Endothelial cell of umbilical vein (primary cell): ENCODE measurements at regions of chr6 and their contacts with region 1.

Region 1: DNA sequence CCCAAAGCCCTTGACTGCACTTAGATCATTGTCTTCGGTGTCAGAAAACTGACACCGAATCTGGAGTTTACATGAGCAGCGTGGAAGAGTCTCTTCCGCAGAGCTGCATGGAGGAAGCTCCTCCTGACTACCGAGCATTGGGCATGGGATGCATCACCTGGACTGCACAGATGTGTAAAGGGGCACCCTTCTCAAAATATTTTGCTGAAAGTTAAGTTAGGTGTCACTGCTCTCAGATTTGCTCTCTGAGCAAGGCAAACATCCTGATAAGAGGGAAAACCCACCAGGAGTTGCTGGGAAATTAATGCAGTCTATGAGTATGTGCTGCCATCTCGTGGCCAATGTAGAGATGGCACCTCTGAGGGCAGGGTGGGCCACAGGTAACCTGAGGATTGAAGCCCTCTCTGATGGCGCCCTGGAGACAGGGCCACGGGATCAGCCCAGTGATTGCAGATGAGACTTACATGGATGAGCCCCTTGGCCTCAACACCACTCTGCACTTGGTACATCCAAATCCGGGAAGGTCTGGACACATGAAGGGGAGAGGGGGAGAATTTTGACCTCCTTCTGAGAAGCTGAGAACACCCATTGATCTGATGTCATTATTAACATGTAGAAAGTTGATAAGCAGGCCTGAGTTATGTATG is 129.9 kb downstream of the LPA start:
- DNase-seq: peak; percentile 47
- H3K4me3 ChIP-seq: no peak overlapping the region
- H3K27ac ChIP-seq: no peak overlapping the region
- H3K4me1 ChIP-seq: no peaks in the 10 kb centered on the region
- H3K27me3 ChIP-seq: no peaks in the 10 kb centered on the region
- CTCF ChIP-seq: peak; percentile 71 to 79
- POLR2A ChIP-seq: no peak

Region 2: DNA sequence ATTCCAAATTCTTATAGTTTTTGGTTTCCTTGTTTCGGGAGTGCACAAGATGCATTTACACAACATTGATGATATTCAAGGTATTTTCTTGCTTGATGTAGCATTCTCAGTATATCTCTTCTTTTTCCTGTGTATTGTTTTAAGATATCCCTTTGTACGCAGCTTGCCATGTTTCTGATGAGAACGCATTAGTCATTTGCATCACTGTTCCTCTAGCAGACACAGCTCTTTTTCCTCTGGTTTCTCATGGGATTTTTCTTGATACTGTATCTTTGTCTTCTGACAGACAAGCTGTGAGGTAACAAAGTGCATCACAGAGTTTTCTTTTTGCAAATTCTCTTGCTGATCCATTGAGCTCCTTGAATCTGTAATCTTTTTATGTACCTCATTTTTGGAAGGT is 39.6 kb before region 1 on chr6:
- CTCF ChIA-PET with region 1: no interaction called
- POLR2A ChIA-PET with region 1: no interaction called
- dilution Hi-C with region 1: no loop called
- intact Hi-C with region 1: no loop called
- DNase-seq: no peak
- H3K4me3 ChIP-seq: no peak overlapping the region
- H3K27ac ChIP-seq: no peak overlapping the region
- H3K4me1 ChIP-seq: no peaks in the 10 kb centered on the region
- H3K27me3 ChIP-seq: no peaks in the 10 kb centered on the region
- CTCF ChIP-seq: no peak
- POLR2A ChIP-seq: no peak

Region 3: GRCh38 chr6:160520043-160520904 is 13.9 kb before region 1 on chr6:
- CTCF ChIA-PET with region 1: interaction called, 47 read pairs
- POLR2A ChIA-PET with region 1: no interaction called
- dilution Hi-C with region 1: no loop called
- intact Hi-C with region 1: loop called (anchors 1 kb)
- DNase-seq: peak; percentile 25
- H3K4me3 ChIP-seq: peak overlapping the region; percentile 18 to 55 (median 41)
- H3K27ac ChIP-seq: no peak overlapping the region
- H3K4me1 ChIP-seq: peaks cover 4% of the 10 kb centered on the region
- H3K27me3 ChIP-seq: peaks cover 0 to 8% of the 10 kb centered on the region in 2 experiments
- CTCF ChIP-seq: peak; percentile 80 to 91
- POLR2A ChIP-seq: no peak